ENCODE measurements at regions of chr3 and their contacts with region 1.

Region 1: GRCh38 chr3:120503727-120504616 is 53.2 kb upstream of the FSTL1 start:
- DNase-seq: no peak
- H3K4me3 ChIP-seq: no peak overlapping the region
- CTCF ChIP-seq: no peak

Region 2: GRCh38 chr3:120420928-120421551 is 82.9 kb before region 1 on chr3:
- in situ Hi-C with region 1: loop called (anchors 5 kb)
- DNase-seq: peak; percentile 66
- H3K4me3 ChIP-seq: no peak overlapping the region
- CTCF ChIP-seq: peak; percentile 44

Region 3: DNA sequence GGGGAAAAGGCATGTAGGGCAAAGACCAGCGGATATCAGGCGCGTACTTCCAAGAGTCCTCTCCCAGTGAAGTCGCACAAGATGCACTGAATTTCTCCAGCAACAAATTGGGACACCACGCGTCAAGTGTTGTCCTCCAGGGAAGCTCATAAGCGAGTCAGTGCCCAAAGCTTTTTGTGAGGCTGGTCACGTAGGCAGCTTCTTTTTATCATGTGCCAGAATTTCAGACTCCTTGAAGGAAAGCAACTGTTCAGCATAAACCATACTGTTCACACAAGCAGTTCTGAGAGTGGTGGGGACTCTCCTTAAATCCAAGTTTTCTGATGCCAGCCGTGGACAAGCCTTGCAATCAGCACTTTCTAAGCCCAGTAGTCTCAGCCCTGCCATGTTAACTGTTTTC is 43.1 kb before region 1 on chr3:
- in situ Hi-C with region 1: no loop called
- DNase-seq: no peak
- H3K4me3 ChIP-seq: no peak overlapping the region
- CTCF ChIP-seq: no peak

Region 4: GRCh38 chr3:120558771-120559241 is 54.8 kb after region 1 on chr3:
- in situ Hi-C with region 1: loop called (anchors 5 kb)
- DNase-seq: peak; percentile 81
- H3K4me3 ChIP-seq: peak overlapping the region; percentile 41
- CTCF ChIP-seq: peak; percentile 90